OCI-LY7 (cell line): ENCODE measurements at regions of chr5 and their contacts with region 1.

Region 1: DNA sequence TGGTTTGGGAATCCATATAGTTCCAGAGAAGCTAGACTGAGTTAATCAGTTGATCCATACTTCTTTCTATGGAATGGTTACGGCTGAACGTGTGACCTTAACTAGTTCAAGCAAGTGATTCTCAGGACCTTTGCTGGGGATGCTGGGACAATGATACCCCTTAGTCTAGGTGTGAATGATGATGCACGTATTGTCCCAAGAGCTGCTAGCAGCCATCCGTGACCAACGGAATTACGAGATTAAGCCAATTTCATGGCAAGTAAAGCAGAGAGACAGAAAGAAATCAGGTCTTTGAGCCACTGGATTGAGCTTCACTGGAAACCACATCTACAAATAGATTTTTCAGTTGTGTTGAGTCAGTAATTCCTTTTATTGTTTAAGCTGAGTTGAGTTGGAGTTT is 99.2 kb upstream of the LIFR start:
- DNase-seq: no peak
- H3K4me3 ChIP-seq: no peak overlapping the region
- H3K27ac ChIP-seq: no peak overlapping the region
- H3K4me1 ChIP-seq: no peaks in the 10 kb centered on the region
- CTCF ChIP-seq: no peak

Region 2: GRCh38 chr5:38250763-38251448 is 404.8 kb before region 1 on chr5:
- CTCF ChIA-PET with region 1: no interaction called
- POLR2A ChIA-PET with region 1: no interaction called
- intact Hi-C with region 1: no loop called
- DNase-seq: no peak
- H3K4me3 ChIP-seq: no peak overlapping the region
- H3K27ac ChIP-seq: no peak overlapping the region
- H3K4me1 ChIP-seq: no peaks in the 10 kb centered on the region
- CTCF ChIP-seq: no peak

Region 3: DNA sequence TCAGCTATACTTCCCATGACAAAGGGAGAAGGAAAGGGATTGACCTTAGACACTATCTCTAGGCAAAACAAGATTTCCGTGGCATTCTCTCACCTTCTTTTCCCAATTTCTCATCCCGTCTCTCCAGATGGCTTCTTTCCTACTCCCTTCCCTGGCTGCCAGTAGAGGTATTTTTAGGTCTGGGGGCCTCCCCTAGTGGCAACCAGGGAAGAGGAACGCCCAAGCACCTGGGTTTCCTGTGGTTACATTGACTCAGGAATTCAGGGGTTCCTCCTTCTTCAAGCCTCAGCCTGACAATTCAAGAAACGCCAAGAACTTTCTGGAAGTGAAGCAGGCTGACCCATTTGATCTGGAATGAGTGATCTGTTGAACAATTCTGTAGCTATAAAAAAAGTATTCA is 78.7 kb after region 1 on chr5:
- CTCF ChIA-PET with region 1: no interaction called
- POLR2A ChIA-PET with region 1: interaction called, 10 read pairs
- intact Hi-C with region 1: no loop called
- DNase-seq: no peak
- H3K4me3 ChIP-seq: no peak overlapping the region
- H3K27ac ChIP-seq: no peak overlapping the region
- H3K4me1 ChIP-seq: no peaks in the 10 kb centered on the region
- CTCF ChIP-seq: no peak